Transverse colon (tissue), 4 donors: ENCODE measurements at regions of chr17 and their contacts with region 1.

Region 1: DNA sequence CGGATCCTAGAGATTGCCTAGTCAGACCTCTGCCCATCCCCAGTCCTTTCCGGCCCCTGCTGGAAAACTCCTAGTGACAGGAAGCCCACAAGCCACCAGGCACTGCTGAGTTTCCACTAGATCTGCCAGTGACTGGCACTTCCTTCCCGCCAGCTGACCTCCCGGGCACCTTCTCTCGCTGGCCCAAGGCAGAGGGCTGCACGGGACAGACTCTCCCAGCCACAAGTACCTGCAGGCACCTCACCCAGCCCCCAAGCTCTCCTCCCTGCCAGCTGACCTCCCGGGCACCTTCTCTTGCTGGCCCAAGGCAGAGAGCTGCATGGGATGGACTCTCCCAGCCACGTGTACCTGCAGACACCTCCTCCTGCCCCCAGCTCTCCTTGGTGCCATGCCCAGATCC is 66.3 kb upstream of the DOC2B start:
- DNase-seq: peak; percentile 7
- H3K4me3 ChIP-seq: no peak overlapping the region
- H3K27ac ChIP-seq: no peak overlapping the region
- H3K4me1 ChIP-seq: peaks cover 0 to 8% (median 3%) of the 10 kb centered on the region in 4 donors
- H3K27me3 ChIP-seq: no peaks in the 10 kb centered on the region
- CTCF ChIP-seq: no peak
- EP300 ChIP-seq: no peak
- POLR2A ChIP-seq: no peak

Region 2: DNA sequence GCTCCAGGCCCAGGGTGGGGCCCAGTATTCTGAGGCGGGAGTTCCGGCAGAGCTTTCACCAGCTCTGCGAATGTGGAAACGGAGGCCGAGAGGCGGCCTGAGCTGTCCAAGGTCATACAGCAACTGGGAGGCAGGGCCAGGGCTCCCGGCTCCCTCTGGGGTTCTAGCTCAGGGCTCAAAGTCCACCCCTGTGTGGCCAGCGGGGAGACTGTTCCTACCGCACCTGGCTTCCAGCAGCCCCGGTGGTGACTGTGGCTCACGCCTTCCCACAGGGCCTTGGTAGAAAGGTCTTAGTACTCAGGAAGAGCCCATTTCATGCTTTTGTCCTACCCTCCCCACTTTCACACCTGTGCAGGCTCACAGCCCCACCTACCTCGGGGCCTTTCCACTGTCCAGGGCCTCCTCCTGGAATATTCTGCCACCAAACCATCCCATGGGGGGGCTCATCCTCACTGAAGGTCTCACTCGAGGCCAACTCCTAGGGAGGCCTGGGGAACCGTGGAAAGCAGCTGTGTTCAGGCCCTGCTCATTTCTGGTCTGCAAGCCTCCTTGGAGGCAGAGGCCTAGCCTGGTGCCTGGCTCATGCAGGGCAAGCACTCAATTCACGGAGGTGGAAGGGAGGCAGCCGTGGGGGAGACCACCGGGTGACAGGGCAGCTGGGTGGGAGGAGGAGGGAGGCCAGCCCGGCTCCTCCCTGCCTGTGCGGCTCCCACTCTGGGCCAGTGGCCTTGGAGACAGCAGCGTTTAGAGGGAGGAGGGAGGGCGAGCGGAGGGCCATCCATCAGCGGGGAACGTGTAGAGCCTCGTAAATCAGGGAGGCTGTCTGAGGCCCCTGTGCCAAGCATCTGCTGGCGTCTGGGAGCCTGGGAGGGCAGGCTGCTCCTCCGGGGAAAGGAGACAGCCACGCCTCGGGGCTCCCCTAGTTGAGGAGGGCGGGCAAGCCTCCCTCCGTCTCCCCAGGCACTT is 53.6 kb before region 1 on chr17:
- in situ Hi-C with region 1: no loop called
- intact Hi-C with region 1: loop called (anchors 2 kb)
- DNase-seq: no peak
- H3K4me3 ChIP-seq: no peak overlapping the region
- H3K27ac ChIP-seq: no peak overlapping the region
- H3K4me1 ChIP-seq: peaks cover 0 to 4% (median 0%) of the 10 kb centered on the region in 4 donors
- H3K27me3 ChIP-seq: peaks cover 3% of the 10 kb centered on the region
- CTCF ChIP-seq: no peak
- EP300 ChIP-seq: no peak
- POLR2A ChIP-seq: no peak

Region 3: GRCh38 chr17:412211-413015 is 164.6 kb after region 1 on chr17:
- in situ Hi-C with region 1: no loop called
- intact Hi-C with region 1: no loop called
- DNase-seq: peak; percentile 59
- H3K4me3 ChIP-seq: no peak overlapping the region
- H3K27ac ChIP-seq: peak overlapping the region in 1 of 4 donors; percentile 81
- H3K4me1 ChIP-seq: peaks cover 0 to 28% (median 16%) of the 10 kb centered on the region in 4 donors
- H3K27me3 ChIP-seq: no peaks in the 10 kb centered on the region
- CTCF ChIP-seq: peak; percentile 74 to 83 (median 78)
- EP300 ChIP-seq: no peak
- POLR2A ChIP-seq: no peak